ENCODE measurements at regions of chr6 and their contacts with region 1.

Region 1: GRCh38 chr6:4155848-4156466 is 20.6 kb upstream of the ECI2 start:
- DNase-seq: peak; percentile 44
- H3K4me3 ChIP-seq: no peak overlapping the region
- CTCF ChIP-seq: peak; percentile 79

Region 2: DNA sequence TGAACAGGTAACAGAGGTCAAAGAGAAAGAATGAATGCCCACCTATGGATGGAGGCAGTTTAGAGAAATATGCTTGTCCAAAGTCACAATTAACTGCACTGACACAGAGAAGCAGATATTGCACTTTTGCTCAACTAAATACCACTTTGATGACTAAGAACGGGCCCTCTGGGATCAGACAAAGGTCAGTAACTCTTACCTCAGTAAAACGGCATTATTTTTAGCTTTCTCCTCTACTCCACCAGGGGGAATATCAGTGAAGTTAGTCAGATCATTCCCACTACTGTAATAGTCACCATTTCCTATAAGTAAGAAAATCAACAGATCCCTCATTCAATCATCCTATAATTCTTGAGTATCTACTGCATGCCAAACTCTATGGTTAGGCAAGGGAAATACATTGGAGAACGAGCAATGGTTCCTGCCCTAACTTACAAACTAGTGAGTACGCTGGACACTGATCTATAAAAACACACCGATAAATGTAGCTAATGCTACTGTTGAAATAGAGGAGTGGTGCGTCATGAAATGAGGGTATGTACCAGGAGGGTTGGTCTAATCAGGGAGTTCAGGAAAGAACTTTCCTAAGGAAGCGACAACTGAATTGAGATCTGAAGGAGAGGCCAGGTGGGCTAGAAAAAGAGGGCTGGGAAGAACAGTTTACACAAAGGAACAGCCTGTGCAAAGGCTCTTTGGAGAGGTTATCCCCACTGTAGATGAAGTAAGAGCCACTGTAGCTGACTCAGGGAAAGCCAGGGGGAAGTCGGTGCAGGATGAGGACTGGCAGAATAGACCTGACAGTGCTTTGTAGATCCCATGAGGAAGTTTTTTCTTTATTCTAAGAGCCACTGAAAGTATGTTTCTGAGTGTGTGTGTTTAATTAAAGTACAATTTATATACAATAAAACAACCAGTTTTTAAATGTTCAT is 29.8 kb before region 1 on chr6:
- CTCF ChIA-PET with region 1: interaction called, 30 read pairs
- POLR2A ChIA-PET with region 1: interaction called, 3 read pairs
- DNase-seq: peak; percentile 72
- H3K4me3 ChIP-seq: no peak overlapping the region
- CTCF ChIP-seq: peak; percentile 35

Region 3: DNA sequence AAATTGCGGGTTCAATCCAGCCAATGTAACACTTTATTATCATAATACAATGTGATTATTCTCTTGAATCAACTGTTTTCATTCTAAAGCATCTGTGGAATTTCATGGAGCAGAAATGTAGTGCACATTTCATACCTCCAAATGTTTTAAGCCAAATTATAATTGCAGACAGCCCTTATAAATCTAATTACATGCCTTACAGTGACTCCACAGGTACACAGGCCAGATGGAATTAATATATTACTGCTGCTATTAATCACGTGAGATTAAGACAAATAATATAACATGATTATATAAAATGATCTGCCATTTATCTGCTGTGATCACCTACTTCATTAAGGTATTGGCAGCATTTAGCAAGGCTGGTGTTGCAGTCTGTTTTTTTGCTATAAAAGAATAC is 10.9 kb before region 1 on chr6:
- CTCF ChIA-PET with region 1: interaction called, 26 read pairs
- POLR2A ChIA-PET with region 1: no interaction called
- DNase-seq: no peak
- H3K4me3 ChIP-seq: no peak overlapping the region
- CTCF ChIP-seq: no peak

Region 4: GRCh38 chr6:4178737-4179333 is 22.9 kb after region 1 on chr6:
- CTCF ChIA-PET with region 1: interaction called, 13 read pairs
- POLR2A ChIA-PET with region 1: no interaction called
- DNase-seq: no peak
- H3K4me3 ChIP-seq: no peak overlapping the region
- CTCF ChIP-seq: no peak

Measured in AG04449 (cell line).